GM23248 (cell line): ENCODE measurements at regions of chr4 and their contacts with region 1.

Region 1: DNA sequence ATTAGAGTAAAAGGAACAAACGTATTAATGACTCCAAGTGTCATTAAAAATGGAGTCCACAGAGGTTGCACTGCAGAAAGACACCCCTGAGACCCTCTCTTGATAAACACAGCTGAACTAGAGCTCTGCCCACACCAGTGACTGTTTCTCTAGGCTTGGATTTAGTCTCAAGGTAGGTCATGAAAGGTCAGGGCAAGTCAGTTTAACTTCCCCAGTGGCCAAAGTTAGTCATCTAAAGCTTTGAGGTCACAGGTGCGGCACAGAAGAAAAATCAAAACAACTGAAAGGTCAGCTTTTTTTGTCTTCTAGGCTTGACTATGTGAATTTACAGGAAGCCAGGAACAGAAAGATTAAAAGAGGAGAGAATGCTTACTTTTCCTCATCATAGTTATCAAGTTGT is 749.6 kb downstream of the RAB28 start:
- DNase-seq: no peak
- H3K4me3 ChIP-seq: no peak overlapping the region
- H3K27ac ChIP-seq: no peak overlapping the region
- H3K4me1 ChIP-seq: no peaks in the 10 kb centered on the region
- H3K27me3 ChIP-seq: no peaks in the 10 kb centered on the region

Region 2: GRCh38 chr4:13559413-13559812 is 824.8 kb after region 1 on chr4:
- in situ Hi-C with region 1: loop called (anchors 10 kb)
- DNase-seq: peak; percentile 64
- H3K4me3 ChIP-seq: no peak overlapping the region; the same call in 1 of the 2 replicates
- H3K27ac ChIP-seq: no peak overlapping the region
- H3K4me1 ChIP-seq: peaks cover 16% of the 10 kb centered on the region
- H3K27me3 ChIP-seq: no peaks in the 10 kb centered on the region